Mucosa of descending colon (tissue), 3 donors: ENCODE measurements at regions of chr22 and their contacts with region 1.

Region 1: GRCh38 chr22:31561238-31561887 is 65.0 kb downstream of the SFI1 start:
- DNase-seq: peak; percentile 69 to 90 (median 86)
- ATAC-seq: peak; percentile 100
- H3K4me3 ChIP-seq: no peak overlapping the region
- H3K4me1 ChIP-seq: no peaks in the 10 kb centered on the region
- CTCF ChIP-seq: peak; percentile 41

Region 2: DNA sequence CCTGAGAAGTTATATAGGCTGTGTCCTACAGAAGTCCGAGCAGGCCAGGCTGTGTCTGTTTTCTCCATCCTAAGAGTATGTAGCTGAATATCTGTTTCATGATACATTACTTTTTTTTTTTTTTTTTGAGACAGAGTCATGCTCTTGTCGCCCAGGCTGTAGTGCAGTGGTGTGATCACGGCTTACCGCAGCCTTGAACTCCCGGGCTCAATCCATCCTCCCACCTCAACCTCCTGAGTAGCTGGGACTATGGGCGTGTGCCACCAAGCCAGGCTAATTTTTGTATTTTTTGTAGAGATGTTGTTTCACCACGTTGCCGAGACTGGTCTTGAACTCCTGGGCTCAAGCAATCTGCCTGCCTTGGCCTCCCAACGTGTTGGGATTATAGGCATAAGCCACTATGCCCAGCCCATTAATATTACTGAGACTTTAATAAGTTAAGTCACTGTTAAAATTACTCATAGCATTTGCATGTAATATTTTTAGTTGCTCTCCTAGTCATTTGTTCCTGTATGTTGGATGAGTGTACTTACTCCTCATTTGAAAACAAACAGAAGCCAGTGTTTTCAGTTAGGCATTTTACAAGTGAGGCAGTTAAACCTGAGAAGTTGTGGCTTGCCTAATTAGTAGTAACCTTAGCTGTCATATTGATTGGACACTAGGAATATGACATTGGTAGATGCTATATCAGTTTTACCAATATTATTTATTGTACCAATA is 135.9 kb before region 1 on chr22:
- intact Hi-C with region 1: no loop called
- DNase-seq: no peak
- ATAC-seq: no peak
- H3K4me3 ChIP-seq: no peak overlapping the region
- H3K4me1 ChIP-seq: no peaks in the 10 kb centered on the region
- CTCF ChIP-seq: no peak

Region 3: GRCh38 chr22:31630331-31631329 is 69.3 kb after region 1 on chr22:
- intact Hi-C with region 1: loop called (anchors 5 to 10 kb)
- DNase-seq: peak; percentile 72 to 94 (median 83)
- ATAC-seq: peak; percentile 81
- H3K4me3 ChIP-seq: peak overlapping the region; percentile 48
- H3K4me1 ChIP-seq: peaks cover 23% of the 10 kb centered on the region
- CTCF ChIP-seq: no peak

Region 4: DNA sequence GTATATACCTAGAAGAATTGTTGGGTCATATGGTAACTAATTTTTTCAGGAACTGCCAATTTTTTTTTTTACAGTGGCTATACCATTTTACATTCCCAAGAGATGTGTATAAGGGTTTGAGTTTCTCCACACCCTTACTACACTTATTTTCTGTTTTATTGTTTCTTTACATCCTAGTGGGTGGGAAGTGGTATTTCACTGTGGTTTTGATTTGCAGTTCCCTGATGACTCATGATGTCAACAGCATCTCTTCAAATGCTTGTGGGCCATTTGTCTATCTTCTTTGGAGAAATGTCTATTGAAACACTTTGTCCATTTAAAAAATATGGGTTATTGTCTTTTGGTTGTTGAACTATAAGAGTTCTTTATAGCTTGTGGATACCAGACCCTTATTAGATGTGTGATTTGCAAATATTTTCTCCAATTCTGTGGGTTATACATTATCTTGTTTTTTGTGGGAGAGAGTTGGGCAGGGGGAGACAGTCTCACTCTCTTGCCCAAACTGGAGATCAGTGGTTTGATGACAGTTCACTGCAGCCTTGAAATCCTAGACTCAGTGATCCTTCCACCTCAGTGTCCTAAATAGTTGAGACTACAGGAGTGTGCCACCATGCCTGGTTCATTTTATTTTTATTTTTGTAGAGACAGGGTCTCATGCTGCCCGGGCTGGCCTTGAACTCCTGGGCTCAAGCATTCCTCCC is 131.0 kb after region 1 on chr22:
- intact Hi-C with region 1: no loop called
- DNase-seq: no peak
- ATAC-seq: no peak
- H3K4me3 ChIP-seq: no peak overlapping the region
- H3K4me1 ChIP-seq: no peaks in the 10 kb centered on the region
- CTCF ChIP-seq: no peak